ENCODE measurements at regions of chr15 and their contacts with region 1.

Region 1: GRCh38 chr15:89177633-89178306 is 43.6 kb downstream of the RLBP1 start:
- DNase-seq: peak; percentile 59 to 93
- H3K4me3 ChIP-seq: no peak overlapping the region
- H3K27ac ChIP-seq: peak overlapping the region in 1 of 5 donors; percentile 48
- H3K4me1 ChIP-seq: peaks cover 4 to 25% (median 14%) of the 10 kb centered on the region in 4 donors
- H3K27me3 ChIP-seq: no peaks in the 10 kb centered on the region
- CTCF ChIP-seq: peak in 5 of 7 experiments; percentile 59 to 85 (median 73)
- EP300 ChIP-seq: no peak
- POLR2A ChIP-seq: no peak

Region 2: DNA sequence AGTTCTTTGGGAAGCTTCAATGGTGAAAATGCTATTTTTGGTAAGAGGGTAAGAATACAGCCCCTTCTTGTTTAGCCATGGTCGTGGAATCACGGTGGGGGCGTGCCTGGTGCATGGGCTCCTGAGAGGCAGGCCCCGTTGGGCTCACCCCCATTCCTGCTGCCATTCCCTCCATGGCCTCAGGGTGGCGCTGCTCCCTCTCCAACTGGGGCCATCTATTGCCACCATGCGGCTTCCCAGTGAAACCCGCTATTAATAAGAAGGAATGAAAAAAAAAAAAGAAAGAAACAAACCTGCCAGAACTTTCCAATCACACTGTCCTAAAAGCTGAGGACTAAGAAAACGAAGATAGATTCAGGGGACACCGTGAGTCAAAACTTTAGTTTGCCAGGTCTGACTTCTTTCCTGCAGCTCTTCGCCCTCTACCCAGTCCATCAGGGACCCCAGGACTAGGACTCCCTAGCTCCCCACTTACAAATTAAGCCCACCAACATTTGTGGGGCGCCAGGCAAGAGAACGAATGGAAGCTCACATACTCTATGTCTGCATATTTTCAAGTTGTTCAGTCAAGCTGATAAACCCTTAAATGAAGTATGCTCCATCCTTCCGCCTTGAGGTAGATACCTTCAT is 120.2 kb before region 1 on chr15:
- intact Hi-C with region 1: loop called (anchors 5 kb)
- DNase-seq: peak; percentile 90 to 91
- H3K4me3 ChIP-seq: no peak overlapping the region
- H3K27ac ChIP-seq: peak overlapping the region in 1 of 5 donors; percentile 16
- H3K4me1 ChIP-seq: peaks cover 4 to 21% (median 12%) of the 10 kb centered on the region in 4 donors
- H3K27me3 ChIP-seq: no peaks in the 10 kb centered on the region
- CTCF ChIP-seq: peak in 6 of 7 experiments; percentile 70 to 100 (median 99)
- EP300 ChIP-seq: no peak
- POLR2A ChIP-seq: no peak

Region 3: DNA sequence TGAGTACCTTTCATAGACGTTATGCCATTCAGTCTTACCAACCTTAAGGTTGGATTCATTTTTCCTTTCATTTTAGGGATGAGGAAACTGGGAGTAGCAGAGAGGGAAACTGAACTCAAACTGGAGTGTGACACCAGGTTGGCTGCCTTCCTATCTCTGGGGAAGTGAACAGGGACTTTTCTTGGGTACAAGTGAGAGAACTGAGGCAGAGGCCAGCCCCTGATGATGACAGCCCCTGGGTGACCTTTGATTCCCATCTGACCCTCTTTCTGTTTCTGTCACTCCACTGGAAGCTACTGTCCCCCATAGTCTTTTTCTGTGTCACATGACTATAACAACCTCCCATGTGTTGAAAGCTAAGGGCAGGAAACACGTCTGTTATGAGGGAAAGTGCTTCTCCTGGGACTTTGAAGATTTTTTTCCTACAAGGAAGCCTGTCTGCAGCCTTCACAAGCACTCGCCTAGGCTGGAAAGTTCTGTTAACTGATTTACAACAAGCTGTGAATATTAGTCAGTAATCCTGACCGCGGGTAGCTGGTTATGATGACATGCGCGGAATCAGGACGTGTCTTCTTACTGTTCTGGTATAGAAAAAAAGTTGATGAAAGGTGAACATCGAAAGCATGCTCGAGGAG is 58.2 kb before region 1 on chr15:
- intact Hi-C with region 1: no loop called
- DNase-seq: peak in 1 of 2 donors; percentile 68
- H3K4me3 ChIP-seq: no peak overlapping the region
- H3K27ac ChIP-seq: peak overlapping the region; percentile 82 to 95 (median 89)
- H3K4me1 ChIP-seq: peaks cover 65 to 95% (median 85%) of the 10 kb centered on the region in 4 donors
- H3K27me3 ChIP-seq: no peaks in the 10 kb centered on the region
- CTCF ChIP-seq: no peak
- EP300 ChIP-seq: no peak
- POLR2A ChIP-seq: no peak

Region 4: GRCh38 chr15:89321521-89322410 is 144.0 kb after region 1 on chr15:
- intact Hi-C with region 1: no loop called
- DNase-seq: peak in 1 of 2 donors; percentile 40
- H3K4me3 ChIP-seq: no peak overlapping the region
- H3K27ac ChIP-seq: no peak overlapping the region
- H3K4me1 ChIP-seq: peaks cover 0 to 10% (median 0%) of the 10 kb centered on the region in 4 donors
- H3K27me3 ChIP-seq: no peaks in the 10 kb centered on the region
- CTCF ChIP-seq: no peak
- EP300 ChIP-seq: no peak
- POLR2A ChIP-seq: no peak